AG04450 (cell line): ENCODE measurements at regions of chr1 and their contacts with region 1.

Region 1: GRCh38 chr1:56584910-56585528 is 5.7 kb upstream of the PLPP3 start:
- DNase-seq: peak; percentile 49
- H3K4me3 ChIP-seq: no peak overlapping the region
- H3K27ac ChIP-seq: no peak overlapping the region
- H3K27me3 ChIP-seq: no peaks in the 10 kb centered on the region
- CTCF ChIP-seq: peak; percentile 81

Region 2: DNA sequence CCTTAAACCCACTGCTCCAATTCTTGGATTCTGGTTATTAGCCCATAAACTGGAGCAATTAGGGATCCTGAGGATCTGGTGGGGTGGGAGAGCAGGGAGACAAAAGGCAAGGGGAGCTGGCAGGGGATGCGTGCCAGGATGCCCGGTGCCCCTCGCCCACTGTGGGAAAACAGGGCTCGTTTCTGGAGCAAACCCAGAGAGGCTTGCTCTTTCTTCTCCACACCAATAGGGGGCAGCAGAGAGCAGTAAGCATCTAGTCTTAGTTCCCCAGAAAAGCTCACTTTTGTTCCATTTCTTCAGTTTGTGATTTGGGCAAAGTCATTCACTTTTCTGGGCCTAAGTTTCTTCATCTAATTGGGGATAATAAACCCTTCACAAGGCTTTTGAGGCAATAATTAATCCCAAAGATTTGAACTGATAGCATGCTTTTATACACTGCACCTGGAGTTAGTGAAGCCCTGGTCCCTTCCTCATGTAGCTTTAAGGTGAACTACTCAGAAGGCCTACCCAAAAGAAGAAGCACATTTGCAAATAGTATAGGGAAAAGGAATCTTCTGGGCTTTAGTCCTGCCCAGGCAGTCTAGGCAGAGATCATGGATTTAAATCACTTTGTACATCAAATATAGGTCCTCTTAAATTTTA is 1209.3 kb before region 1 on chr1:
- CTCF ChIA-PET with region 1: interaction called, 10 read pairs
- POLR2A ChIA-PET with region 1: no interaction called
- DNase-seq: peak; percentile 13
- H3K4me3 ChIP-seq: no peak overlapping the region
- H3K27ac ChIP-seq: no peak overlapping the region
- H3K27me3 ChIP-seq: no peaks in the 10 kb centered on the region
- CTCF ChIP-seq: peak; percentile 91